ENCODE measurements at regions of chr11 and their contacts with region 1.

Region 1: GRCh38 chr11:75399344-75400145 is at the start of gene RPS3:
- DNase-seq: peak; percentile 80 to 90
- H3K4me3 ChIP-seq: peak within 1 kb of the TSS; percentile 86 to 100 (median 99)
- H3K27ac ChIP-seq: peak within 1 kb of the TSS; percentile 97
- H3K4me1 ChIP-seq: peaks cover 0 to 9% (median 4%) of the 10 kb centered on the region in 4 experiments; a peak in 6 of 7 replicates
- H3K27me3 ChIP-seq: no peaks in the 10 kb centered on the region
- CTCF ChIP-seq: no peak
- EP300 ChIP-seq: no peak
- POLR2A ChIP-seq: peak; percentile 99
- RAD21 ChIP-seq: no peak
- total RNA-seq, gene RPS3: 3,813 and 3,882 TPM in 2 replicates

Region 2: DNA sequence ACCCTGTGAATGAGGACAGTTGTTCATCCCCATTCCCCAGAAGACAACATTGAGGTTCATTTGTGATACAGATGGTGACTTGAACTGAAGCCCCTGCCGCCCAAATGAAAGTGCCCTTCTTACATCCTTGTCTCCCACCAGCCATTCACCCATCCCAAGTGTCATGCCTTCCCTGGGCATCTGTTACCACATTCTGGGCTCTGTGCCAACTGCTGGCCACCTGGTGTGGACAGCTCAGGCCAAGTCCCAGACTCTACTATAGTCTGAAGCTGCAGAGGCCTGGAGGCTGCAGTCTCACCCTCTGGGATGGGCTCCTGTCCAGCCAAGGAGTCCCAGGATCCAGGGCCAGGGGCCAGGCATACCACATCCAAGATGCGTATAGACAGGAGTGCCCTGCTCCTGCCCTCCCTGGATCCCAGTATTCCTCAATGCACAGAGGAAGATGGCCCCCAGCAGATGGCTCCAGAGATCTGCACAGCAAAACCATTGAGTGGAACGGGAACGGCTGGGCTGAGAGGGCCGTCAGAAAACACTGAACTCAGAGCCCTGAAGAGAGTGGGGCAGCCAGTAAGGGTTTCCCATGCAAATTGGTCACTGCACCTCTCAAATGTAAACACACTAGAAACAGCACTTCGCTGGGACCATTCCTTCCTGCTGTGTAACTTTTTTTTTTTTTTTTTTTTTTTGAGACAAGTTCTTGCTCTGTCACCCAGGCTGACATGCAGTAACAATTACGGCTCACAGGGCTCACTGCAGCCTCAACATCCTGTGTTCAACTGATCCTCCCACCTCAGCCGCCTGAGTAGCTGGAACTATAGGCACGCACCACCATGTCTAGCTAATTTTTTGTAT is 70.9 kb before region 1 on chr11:
- CTCF ChIA-PET with region 1: interaction called, 3 read pairs
- POLR2A ChIA-PET with region 1: interaction called, 19 read pairs
- DNase-seq: peak in 1 of 2 experiments; percentile 65
- H3K4me3 ChIP-seq: no peak overlapping the region
- H3K27ac ChIP-seq: no peak overlapping the region
- H3K4me1 ChIP-seq: peaks cover 0 to 13% (median 2%) of the 10 kb centered on the region in 4 experiments; a peak in 4 of 7 replicates
- H3K27me3 ChIP-seq: no peaks in the 10 kb centered on the region
- CTCF ChIP-seq: peak; percentile 60 to 77 (median 70)
- EP300 ChIP-seq: no peak
- POLR2A ChIP-seq: no peak
- RAD21 ChIP-seq: peak; percentile 86 to 90

Region 3: DNA sequence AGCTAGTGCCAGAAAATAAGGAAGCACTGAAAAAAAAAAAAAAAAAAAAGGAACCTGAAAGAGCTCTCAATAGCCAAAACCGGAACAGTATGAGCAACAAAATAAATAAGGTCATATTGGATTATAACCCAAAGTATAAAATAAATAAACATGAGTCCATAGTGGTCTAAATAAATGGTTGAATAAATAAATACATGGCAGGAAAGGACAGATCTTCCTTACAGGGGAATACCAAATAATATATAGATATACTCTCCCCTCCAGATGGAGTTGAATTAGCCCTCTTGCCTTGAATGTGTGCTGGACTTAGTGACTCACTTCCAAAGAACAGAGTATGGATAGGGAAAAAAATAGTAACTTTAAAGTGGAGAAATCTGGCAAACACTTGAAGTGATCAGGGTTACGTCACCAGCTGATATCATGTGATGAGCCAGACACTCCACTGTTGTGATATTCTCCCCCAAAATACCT is 33.8 kb before region 1 on chr11:
- CTCF ChIA-PET with region 1: no interaction called
- POLR2A ChIA-PET with region 1: interaction called, 11 read pairs
- DNase-seq: no peak
- H3K4me3 ChIP-seq: no peak overlapping the region
- H3K27ac ChIP-seq: no peak overlapping the region
- H3K4me1 ChIP-seq: no peaks in the 10 kb centered on the region
- H3K27me3 ChIP-seq: no peaks in the 10 kb centered on the region
- CTCF ChIP-seq: no peak
- EP300 ChIP-seq: no peak
- POLR2A ChIP-seq: no peak
- RAD21 ChIP-seq: no peak

Region 4: DNA sequence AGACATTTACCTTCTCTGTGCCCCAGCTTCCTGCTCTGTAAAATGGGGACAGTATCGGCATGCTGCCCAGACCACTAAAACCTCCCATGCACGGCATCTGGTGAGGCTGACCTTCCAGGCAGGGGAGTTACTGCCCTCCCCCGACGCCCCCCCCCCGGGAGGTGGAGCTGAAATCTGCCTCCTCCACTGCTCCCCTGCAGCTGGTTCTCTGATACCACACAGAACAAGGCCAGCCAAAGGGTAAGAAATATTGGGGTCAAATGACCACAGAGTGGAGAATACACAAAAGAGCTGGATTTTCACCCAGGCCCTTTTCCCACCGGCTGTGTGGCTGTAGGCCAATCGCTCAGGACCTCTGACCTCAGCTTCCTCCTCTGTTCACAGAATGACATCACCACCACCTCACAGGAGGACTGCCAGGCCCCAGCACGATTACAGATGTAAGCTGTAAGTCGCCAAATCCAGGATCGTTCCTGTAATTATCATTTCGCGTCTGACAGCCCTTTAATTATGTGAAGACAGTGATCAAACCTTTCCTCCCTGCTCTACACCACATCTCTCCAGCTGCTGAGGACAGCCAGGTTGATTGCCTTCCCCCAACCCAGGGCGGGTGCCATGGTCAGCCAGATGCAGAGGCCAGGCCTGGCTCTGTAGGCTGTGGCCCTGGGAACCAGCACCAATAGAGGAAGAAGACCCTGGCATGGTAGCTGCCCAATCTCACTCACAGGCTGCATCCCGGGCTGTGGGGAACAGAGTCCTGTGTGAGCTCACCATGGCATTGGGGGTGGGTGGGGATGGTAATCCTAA is 69.2 kb after region 1 on chr11:
- CTCF ChIA-PET with region 1: no interaction called
- POLR2A ChIA-PET with region 1: interaction called, 13 read pairs
- DNase-seq: no peak
- H3K4me3 ChIP-seq: no peak overlapping the region
- H3K27ac ChIP-seq: no peak overlapping the region
- H3K4me1 ChIP-seq: peaks cover 0 to 7% (median 3%) of the 10 kb centered on the region in 4 experiments; a peak in 5 of 7 replicates
- H3K27me3 ChIP-seq: no peaks in the 10 kb centered on the region
- CTCF ChIP-seq: no peak
- EP300 ChIP-seq: no peak
- POLR2A ChIP-seq: no peak
- RAD21 ChIP-seq: no peak

Region 5: GRCh38 chr11:75554258-75555022 is 154.9 kb after region 1 on chr11:
- CTCF ChIA-PET with region 1: interaction called, 3 read pairs
- POLR2A ChIA-PET with region 1: interaction called, 20 read pairs
- DNase-seq: peak in 1 of 2 experiments; percentile 83
- H3K4me3 ChIP-seq: no peak overlapping the region; a peak in 1 of 8 replicates
- H3K27ac ChIP-seq: peak overlapping the region; percentile 55; the same call in 1 of the 2 replicates
- H3K4me1 ChIP-seq: peaks cover 4 to 26% (median 19%) of the 10 kb centered on the region in 4 experiments
- H3K27me3 ChIP-seq: no peaks in the 10 kb centered on the region
- CTCF ChIP-seq: no peak
- EP300 ChIP-seq: no peak; a peak in 1 of 3 replicates
- POLR2A ChIP-seq: 0 out of 3 replicates have a peak, but pooled peaks of 1 of the 2 experiments have one; percentile 65
- RAD21 ChIP-seq: no peak